CD8-positive, alpha-beta T cell (primary cell): ENCODE measurements at regions of chr5 and their contacts with region 1.

Region 1: GRCh38 chr5:150339165-150339564 is 18.3 kb upstream of the TCOF1 start:
- DNase-seq: no peak
- ATAC-seq: no peak
- H3K4me3 ChIP-seq: no peak overlapping the region
- H3K4me3 Mint-ChIP-seq: no peak overlapping the region
- H3K27ac ChIP-seq: no peak overlapping the region
- H3K27ac Mint-ChIP-seq: no peak overlapping the region
- H3K4me1 ChIP-seq: no peaks in the 10 kb centered on the region
- H3K4me1 Mint-ChIP-seq: peaks cover 5% of the 10 kb centered on the region
- H3K27me3 ChIP-seq: no peaks in the 10 kb centered on the region
- H3K27me3 Mint-ChIP-seq: no peaks in the 10 kb centered on the region
- CTCF ChIP-seq: no peak

Region 2: GRCh38 chr5:150036513-150036912 is 302.7 kb before region 1 on chr5:
- CTCF ChIA-PET with region 1: no interaction called
- POLR2A ChIA-PET with region 1: no interaction called
- intact Hi-C with region 1: loop called in 1 of 2 experiments (anchors 10 kb)
- DNase-seq: no peak
- ATAC-seq: no peak
- H3K4me3 ChIP-seq: no peak overlapping the region
- H3K4me3 Mint-ChIP-seq: no peak overlapping the region
- H3K27ac ChIP-seq: no peak overlapping the region
- H3K27ac Mint-ChIP-seq: no peak overlapping the region
- H3K4me1 ChIP-seq: no peaks in the 10 kb centered on the region
- H3K4me1 Mint-ChIP-seq: no peaks in the 10 kb centered on the region
- H3K27me3 ChIP-seq: no peaks in the 10 kb centered on the region
- H3K27me3 Mint-ChIP-seq: no peaks in the 10 kb centered on the region
- CTCF ChIP-seq: no peak

Region 3: GRCh38 chr5:150350524-150351344 is 11.6 kb after region 1 on chr5:
- CTCF ChIA-PET with region 1: interaction called, 17 read pairs
- POLR2A ChIA-PET with region 1: no interaction called
- intact Hi-C with region 1: no loop called
- DNase-seq: peak in 8 of 9 experiments; percentile 5 to 65 (median 36)
- ATAC-seq: peak; percentile 62
- H3K4me3 ChIP-seq: no peak overlapping the region
- H3K4me3 Mint-ChIP-seq: no peak overlapping the region
- H3K27ac ChIP-seq: no peak overlapping the region
- H3K27ac Mint-ChIP-seq: peak overlapping the region; percentile 58
- H3K4me1 ChIP-seq: peaks cover 14% of the 10 kb centered on the region
- H3K4me1 Mint-ChIP-seq: peaks cover 14% of the 10 kb centered on the region
- H3K27me3 ChIP-seq: no peaks in the 10 kb centered on the region
- H3K27me3 Mint-ChIP-seq: no peaks in the 10 kb centered on the region
- CTCF ChIP-seq: peak; percentile 27